ENCODE measurements at regions of chr14 and their contacts with region 1.

Region 1: DNA sequence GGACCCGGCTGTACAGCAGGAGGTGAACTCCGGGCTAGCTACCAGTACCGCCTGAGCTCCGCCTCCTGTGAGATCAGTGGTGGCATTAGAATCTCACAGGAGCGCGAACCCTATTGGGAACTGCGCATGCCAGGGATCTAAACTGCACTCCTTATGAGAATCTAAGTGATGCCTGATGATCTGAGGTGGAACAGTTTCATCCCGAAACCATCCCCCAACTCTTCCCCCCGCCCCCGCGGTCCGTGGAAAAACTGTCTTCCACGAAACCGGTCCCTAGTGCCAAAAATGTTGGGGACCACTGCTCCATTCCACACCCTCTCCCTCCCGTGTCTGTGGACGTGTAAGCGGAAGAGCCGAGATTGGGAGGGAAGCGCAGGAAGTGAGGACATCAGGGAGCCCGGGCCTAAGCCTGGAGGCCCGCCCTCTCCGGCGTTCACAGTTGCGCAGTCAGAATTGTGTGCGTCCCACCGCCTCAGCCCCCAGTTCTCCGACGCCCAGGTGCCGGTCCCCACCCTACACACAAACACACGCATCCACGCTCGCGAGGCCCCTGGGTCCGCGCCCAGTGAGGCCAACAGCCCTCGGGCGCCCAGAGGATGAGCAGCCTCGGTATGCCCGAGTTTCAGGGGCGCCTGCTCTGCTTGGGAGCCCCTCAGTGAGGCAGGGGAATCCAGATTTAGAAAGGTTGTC is 1.8 kb upstream of the RNASE4 start:
- DNase-seq: peak; percentile 63 to 83 (median 79)
- ATAC-seq: peak; percentile 75
- H3K4me3 ChIP-seq: peak overlapping the region; percentile 98
- H3K4me3 Mint-ChIP-seq: no peak overlapping the region
- H3K27ac ChIP-seq: peak overlapping the region; percentile 91
- H3K27ac Mint-ChIP-seq: no peak overlapping the region
- H3K4me1 ChIP-seq: peaks cover 18 to 24% of the 10 kb centered on the region in 2 donors
- H3K4me1 Mint-ChIP-seq: peaks cover 14 to 35% (median 32%) of the 10 kb centered on the region in 7 donors
- H3K27me3 ChIP-seq: no peaks in the 10 kb centered on the region
- H3K27me3 Mint-ChIP-seq: no peaks in the 10 kb centered on the region

Region 2: GRCh38 chr14:20327005-20327869 is 355.3 kb before region 1 on chr14:
- CTCF ChIA-PET with region 1: interaction called, 9 read pairs
- POLR2A ChIA-PET with region 1: interaction called, 17 read pairs
- intact Hi-C with region 1: loop called in 1 of 2 experiments (anchors 2 kb)
- DNase-seq: peak in 7 of 9 donors; percentile 44 to 74 (median 66)
- ATAC-seq: peak; percentile 81
- H3K4me3 ChIP-seq: no peak overlapping the region
- H3K4me3 Mint-ChIP-seq: peak overlapping the region in 5 of 10 donors; percentile 2 to 52 (median 26)
- H3K27ac ChIP-seq: no peak overlapping the region
- H3K27ac Mint-ChIP-seq: peak overlapping the region; percentile 35 to 93 (median 66)
- H3K4me1 ChIP-seq: peaks cover 0 to 4% of the 10 kb centered on the region in 2 donors
- H3K4me1 Mint-ChIP-seq: peaks cover 9 to 42% (median 27%) of the 10 kb centered on the region in 7 donors
- H3K27me3 ChIP-seq: no peaks in the 10 kb centered on the region
- H3K27me3 Mint-ChIP-seq: no peaks in the 10 kb centered on the region

Region 3: DNA sequence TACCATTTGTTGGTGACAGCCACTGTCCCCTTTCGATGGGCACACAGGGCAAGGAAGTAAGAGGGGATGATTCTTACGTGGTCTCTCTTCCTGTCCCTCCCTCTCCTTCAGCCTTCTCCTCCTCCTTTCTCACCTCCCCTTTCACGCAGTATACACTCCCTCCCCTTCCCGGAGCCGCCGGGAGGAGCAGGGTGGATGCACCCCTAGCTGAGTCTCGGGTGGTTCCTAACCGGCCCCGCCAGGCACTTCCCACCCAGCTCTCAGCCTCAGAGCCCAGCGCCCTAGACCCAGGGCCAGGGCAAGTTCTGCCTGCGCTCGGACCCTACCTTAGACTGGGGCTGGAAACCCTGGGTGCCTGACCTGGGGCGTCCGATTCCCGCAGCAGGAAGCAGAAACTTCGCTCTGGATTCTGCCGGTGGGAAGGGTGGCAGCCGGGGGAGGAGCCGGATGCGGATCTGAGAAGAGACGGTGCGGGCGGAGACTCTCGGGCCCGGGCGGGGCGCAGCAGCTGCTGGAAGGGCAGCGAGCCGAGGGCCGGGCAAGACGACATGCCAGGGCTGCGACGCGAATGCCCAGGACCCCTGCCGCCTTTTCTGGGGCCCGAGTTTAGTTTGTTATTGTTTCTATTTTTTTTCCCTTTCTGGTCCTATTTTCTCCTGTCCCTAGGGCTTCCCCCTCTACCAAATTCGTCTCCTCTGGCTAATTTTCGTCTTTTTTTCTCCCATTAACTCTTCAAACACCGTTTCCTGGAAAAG is 269.4 kb before region 1 on chr14 and contains the start of gene TEP1:
- CTCF ChIA-PET with region 1: interaction called, 11 read pairs
- POLR2A ChIA-PET with region 1: interaction called, 15 read pairs
- intact Hi-C with region 1: loop called (anchors 1 to 2 kb)
- DNase-seq: peak; percentile 46 to 75 (median 57)
- ATAC-seq: peak; percentile 80
- H3K4me3 ChIP-seq: peak within 1 kb of the TSS; percentile 71
- H3K4me3 Mint-ChIP-seq: peak within 1 kb of the TSS; percentile 94 to 100 (median 97)
- H3K27ac ChIP-seq: peak within 1 kb of the TSS; percentile 86
- H3K27ac Mint-ChIP-seq: peak within 1 kb of the TSS; percentile 90 to 99 (median 93)
- H3K4me1 ChIP-seq: peaks cover 8 to 17% of the 10 kb centered on the region in 2 donors
- H3K4me1 Mint-ChIP-seq: peaks cover 31 to 59% (median 46%) of the 10 kb centered on the region in 7 donors
- H3K27me3 ChIP-seq: no peaks in the 10 kb centered on the region
- H3K27me3 Mint-ChIP-seq: no peaks in the 10 kb centered on the region
- total RNA-seq, gene TEP1: 23.5 to 56.0 (median 43.6) TPM

Region 4: DNA sequence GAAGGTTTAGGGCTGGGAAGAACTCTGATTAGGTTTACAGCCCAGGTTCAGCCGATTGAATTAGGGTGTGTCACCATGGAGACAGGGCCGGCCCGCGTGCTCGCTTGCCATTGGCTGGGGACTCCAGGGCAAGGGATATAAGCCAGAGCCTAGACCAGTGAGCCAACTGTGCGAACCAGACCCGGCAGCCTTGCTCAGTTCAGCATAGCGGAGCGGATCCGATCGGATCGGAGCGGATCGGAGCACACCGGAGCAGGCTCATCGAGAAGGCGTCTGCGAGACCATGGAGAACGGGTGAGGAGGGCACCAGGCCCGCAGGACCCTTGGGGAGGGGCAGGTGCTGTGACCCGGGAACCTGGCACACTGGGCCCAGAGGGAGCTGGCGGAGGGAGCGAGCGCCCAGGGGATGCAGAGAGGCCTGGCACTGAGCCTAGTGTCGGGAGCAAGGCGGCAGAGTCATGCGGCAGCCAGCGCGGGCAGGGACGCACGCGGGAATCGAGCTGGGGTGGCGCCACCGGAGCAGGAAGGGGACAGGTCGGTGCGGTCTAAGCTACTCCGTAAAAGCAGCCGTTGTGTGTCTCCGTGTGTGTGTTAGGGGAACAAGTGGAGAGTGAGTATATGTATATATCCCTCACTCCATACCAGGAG is 213.2 kb before region 1 on chr14 and contains the start of gene PNP:
- CTCF ChIA-PET with region 1: no interaction called
- POLR2A ChIA-PET with region 1: interaction called, 5 read pairs
- intact Hi-C with region 1: loop called in 1 of 2 experiments (anchors 2 kb)
- DNase-seq: peak; percentile 74 to 88 (median 84)
- ATAC-seq: peak; percentile 94
- H3K4me3 ChIP-seq: peak within 1 kb of the TSS; percentile 87
- H3K4me3 Mint-ChIP-seq: peak within 1 kb of the TSS; percentile 95 to 100 (median 99)
- H3K27ac ChIP-seq: peak within 1 kb of the TSS; percentile 87
- H3K27ac Mint-ChIP-seq: peak within 1 kb of the TSS; percentile 89 to 98 (median 97)
- H3K4me1 ChIP-seq: peaks cover 13 to 32% of the 10 kb centered on the region in 2 donors
- H3K4me1 Mint-ChIP-seq: peaks cover 40 to 49% (median 43%) of the 10 kb centered on the region in 7 donors
- H3K27me3 ChIP-seq: no peaks in the 10 kb centered on the region
- H3K27me3 Mint-ChIP-seq: peaks cover 0 to 6% (median 0%) of the 10 kb centered on the region in 5 donors
- total RNA-seq, gene PNP: 58.9 to 179 (median 83.0) TPM

Region 5: GRCh38 chr14:20970983-20971704 is 288.6 kb after region 1 on chr14:
- CTCF ChIA-PET with region 1: interaction called, 6 read pairs
- POLR2A ChIA-PET with region 1: no interaction called
- intact Hi-C with region 1: loop called in 1 of 2 experiments (anchors 5 kb)
- DNase-seq: peak; percentile 59 to 84 (median 74)
- ATAC-seq: peak; percentile 95
- H3K4me3 ChIP-seq: peak overlapping the region; percentile 92
- H3K4me3 Mint-ChIP-seq: peak overlapping the region; percentile 88 to 95 (median 92)
- H3K27ac ChIP-seq: peak overlapping the region; percentile 25
- H3K27ac Mint-ChIP-seq: peak overlapping the region in 5 of 9 donors; percentile 15 to 85 (median 60)
- H3K4me1 ChIP-seq: peaks cover 0 to 5% of the 10 kb centered on the region in 2 donors
- H3K4me1 Mint-ChIP-seq: peaks cover 5 to 17% (median 13%) of the 10 kb centered on the region in 7 donors
- H3K27me3 ChIP-seq: peaks cover 0 to 3% of the 10 kb centered on the region in 2 donors
- H3K27me3 Mint-ChIP-seq: peaks cover 20 to 44% (median 25%) of the 10 kb centered on the region in 5 donors

Region 6: DNA sequence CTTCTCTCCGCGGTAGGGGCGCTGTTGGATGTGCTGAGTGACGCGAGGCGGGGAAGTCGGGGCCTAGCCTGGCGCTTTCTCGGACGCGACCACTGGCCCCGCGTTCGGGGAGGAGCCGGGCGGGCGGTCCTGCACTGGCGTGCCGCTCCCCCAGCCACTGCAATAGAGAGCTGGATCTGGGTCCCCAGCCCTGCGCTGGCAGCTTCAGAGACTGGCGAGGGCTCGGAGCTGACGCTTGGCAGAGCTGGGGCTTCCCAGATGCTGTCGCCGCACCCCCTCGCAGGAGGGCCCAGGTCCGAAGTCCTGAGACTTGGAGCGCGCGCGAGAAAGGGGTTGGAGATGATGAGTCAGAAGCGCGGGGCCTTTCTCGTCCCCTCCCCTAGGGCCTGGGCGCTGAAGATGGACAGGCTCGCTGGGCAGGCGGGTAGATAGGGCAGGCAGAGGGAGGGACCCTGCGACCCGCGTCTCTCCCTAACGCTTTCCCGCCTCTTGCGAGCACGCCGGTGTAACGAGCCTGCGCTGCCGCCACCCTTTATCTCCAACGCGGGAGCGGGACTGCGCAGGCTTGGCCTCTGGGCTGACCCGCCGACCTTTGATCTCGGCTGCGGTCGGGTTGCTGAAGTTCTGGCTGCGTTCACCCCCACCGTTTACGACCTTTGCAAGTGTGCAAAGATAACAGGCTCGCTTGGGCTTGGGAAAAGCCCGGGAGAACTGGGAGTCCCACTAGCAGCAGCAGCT is 421.3 kb after region 1 on chr14:
- CTCF ChIA-PET with region 1: no interaction called
- POLR2A ChIA-PET with region 1: no interaction called
- intact Hi-C with region 1: loop called (anchors 2 to 5 kb)
- DNase-seq: peak; percentile 87 to 94 (median 92)
- ATAC-seq: peak; percentile 92
- H3K4me3 ChIP-seq: peak overlapping the region; percentile 94
- H3K4me3 Mint-ChIP-seq: peak overlapping the region; percentile 74 to 99 (median 91)
- H3K27ac ChIP-seq: peak overlapping the region; percentile 96
- H3K27ac Mint-ChIP-seq: peak overlapping the region; percentile 25 to 97 (median 89)
- H3K4me1 ChIP-seq: peaks cover 3 to 8% of the 10 kb centered on the region in 2 donors
- H3K4me1 Mint-ChIP-seq: peaks cover 23 to 41% (median 26%) of the 10 kb centered on the region in 7 donors
- H3K27me3 ChIP-seq: peaks cover 0 to 4% of the 10 kb centered on the region in 2 donors
- H3K27me3 Mint-ChIP-seq: peaks cover 0 to 11% (median 0%) of the 10 kb centered on the region in 5 donors

Measured in naive thymus-derived CD4-positive, alpha-beta T cell (primary cell).